Mammary epithelial cell (primary cell): ENCODE measurements at regions of chr11 and their contacts with region 1.

Region 1: DNA sequence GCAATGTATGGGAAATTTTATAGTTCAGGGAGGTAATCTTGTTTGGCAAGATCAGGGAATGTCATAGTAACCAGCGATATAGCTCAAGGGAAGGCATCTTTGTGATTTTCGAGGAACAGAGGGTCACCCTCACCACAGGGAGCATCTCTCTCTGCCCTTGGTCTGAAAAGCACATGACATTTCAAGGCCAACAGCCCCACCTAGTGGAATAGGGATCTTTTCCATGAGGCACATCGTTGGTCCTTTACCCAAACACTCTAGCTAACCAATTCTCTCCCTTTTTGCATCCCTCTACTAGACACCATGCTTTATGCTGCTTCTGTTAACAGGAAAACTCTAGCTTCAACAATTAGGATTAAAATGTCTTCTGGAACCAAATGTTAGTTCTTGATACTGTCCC is 179.0 kb downstream of the GRM5 start:
- DNase-seq: peak; percentile 51
- H3K4me3 ChIP-seq: no peak overlapping the region
- H3K27ac ChIP-seq: no peak overlapping the region
- H3K4me1 ChIP-seq: no peaks in the 10 kb centered on the region
- H3K27me3 ChIP-seq: no peaks in the 10 kb centered on the region
- CTCF ChIP-seq: peak; percentile 42 to 70

Region 2: DNA sequence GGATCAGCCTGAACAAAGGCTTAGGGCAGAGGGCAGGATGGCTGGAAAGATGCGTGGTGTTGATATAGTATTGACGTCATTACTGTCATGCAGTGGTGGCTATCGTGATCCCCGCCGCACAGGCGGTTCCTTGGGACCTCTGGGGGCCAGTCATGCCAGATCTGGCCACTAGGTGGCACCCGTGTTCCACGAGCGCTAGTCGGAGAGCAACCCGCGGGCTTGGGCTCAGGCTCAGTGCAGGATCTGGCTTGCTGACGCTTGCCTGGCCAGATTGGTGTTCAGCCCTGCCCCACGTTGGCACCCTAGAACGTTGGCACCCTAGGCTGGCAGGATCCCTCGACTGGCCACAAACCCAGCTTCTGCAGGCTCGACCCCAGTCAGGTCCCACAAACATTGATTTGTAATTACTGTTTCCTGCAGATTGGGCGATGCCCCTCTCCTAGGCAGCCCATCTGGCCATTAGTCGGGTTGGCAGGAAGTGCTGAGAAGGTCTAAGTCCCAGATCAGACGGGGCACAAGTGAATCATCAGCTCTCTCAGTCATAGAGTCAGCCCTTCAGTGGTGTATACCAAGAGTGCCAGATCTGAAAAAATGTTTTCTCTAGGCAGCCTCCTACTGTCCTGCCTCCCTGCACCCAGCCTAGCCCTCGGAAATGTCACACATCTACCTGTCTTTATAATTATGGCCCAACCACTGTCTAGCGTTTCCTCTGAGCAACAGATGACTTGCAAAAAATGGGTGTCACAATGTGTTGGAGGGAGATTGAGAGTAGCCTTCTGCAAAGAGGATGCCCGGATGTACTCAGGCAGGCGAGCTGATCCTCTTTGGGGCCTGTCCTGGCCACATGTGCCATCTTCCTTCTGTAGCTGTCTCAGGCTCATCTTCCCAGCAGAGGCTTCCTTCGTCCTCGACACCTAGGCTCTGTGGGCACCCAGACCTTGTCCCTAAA is 1533.8 kb before region 1 on chr11:
- CTCF ChIA-PET with region 1: no interaction called
- dilution Hi-C with region 1: no loop called
- in situ Hi-C with region 1: loop called in 1 of 2 experiments (anchors 10 kb)
- intact Hi-C with region 1: loop called (anchors 1 kb)
- DNase-seq: peak; percentile 78
- H3K4me3 ChIP-seq: peak overlapping the region in 2 of 3 experiments; percentile 13 to 30
- H3K27ac ChIP-seq: no peak overlapping the region
- H3K4me1 ChIP-seq: peaks cover 8% of the 10 kb centered on the region
- H3K27me3 ChIP-seq: no peaks in the 10 kb centered on the region
- CTCF ChIP-seq: peak; percentile 89 to 99

Region 3: GRCh38 chr11:87722756-87723565 is 1163.8 kb before region 1 on chr11:
- CTCF ChIA-PET with region 1: no interaction called
- dilution Hi-C with region 1: no loop called
- in situ Hi-C with region 1: no loop called
- intact Hi-C with region 1: loop called (anchors 1 kb)
- DNase-seq: peak; percentile 7
- H3K4me3 ChIP-seq: no peak overlapping the region
- H3K27ac ChIP-seq: no peak overlapping the region
- H3K4me1 ChIP-seq: no peaks in the 10 kb centered on the region
- H3K27me3 ChIP-seq: peaks cover 2% of the 10 kb centered on the region
- CTCF ChIP-seq: peak; percentile 78 to 91

Region 4: DNA sequence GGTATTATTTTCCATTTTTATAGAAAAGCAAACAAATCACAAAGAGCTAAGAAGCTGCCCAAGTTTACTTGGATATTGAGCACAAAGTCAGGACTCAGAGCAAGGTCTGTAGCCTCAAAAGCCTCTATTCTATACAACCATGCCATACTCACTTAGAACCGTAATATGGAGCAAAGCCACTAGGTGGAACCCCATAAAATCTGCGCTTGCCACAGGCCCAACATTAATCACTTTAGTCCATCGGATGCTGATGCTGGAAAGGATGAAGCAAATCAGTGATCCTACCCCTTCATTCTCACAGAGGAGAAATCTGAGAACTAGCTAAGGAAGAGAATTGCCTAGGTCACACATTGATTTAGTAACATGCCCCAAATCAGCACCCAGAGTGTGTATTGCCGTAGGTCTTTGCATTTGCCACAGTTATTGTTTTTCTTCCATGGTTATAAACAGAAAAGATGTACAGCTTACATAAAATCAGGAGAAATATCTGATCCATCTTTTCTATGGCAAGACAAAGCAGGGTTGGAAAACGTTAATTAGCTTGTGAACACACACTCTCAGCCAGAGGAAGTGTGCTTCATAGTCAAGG is 654.8 kb before region 1 on chr11:
- CTCF ChIA-PET with region 1: no interaction called
- dilution Hi-C with region 1: no loop called
- in situ Hi-C with region 1: no loop called
- intact Hi-C with region 1: loop called (anchors 5 kb)
- DNase-seq: peak; percentile 34
- H3K4me3 ChIP-seq: no peak overlapping the region
- H3K27ac ChIP-seq: no peak overlapping the region
- H3K4me1 ChIP-seq: no peaks in the 10 kb centered on the region
- H3K27me3 ChIP-seq: no peaks in the 10 kb centered on the region
- CTCF ChIP-seq: peak; percentile 72 to 75

Region 5: GRCh38 chr11:88552377-88553062 is 334.3 kb before region 1 on chr11:
- CTCF ChIA-PET with region 1: interaction called, 5 read pairs
- dilution Hi-C with region 1: no loop called
- in situ Hi-C with region 1: loop called in 1 of 2 experiments (anchors 10 kb)
- intact Hi-C with region 1: no loop called
- DNase-seq: peak; percentile 55
- H3K4me3 ChIP-seq: no peak overlapping the region
- H3K27ac ChIP-seq: no peak overlapping the region
- H3K4me1 ChIP-seq: peaks cover 45% of the 10 kb centered on the region
- H3K27me3 ChIP-seq: no peaks in the 10 kb centered on the region
- CTCF ChIP-seq: peak; percentile 79 to 88

Region 6: GRCh38 chr11:88770475-88771079 is 116.2 kb before region 1 on chr11:
- CTCF ChIA-PET with region 1: no interaction called
- dilution Hi-C with region 1: no loop called
- in situ Hi-C with region 1: no loop called
- intact Hi-C with region 1: no loop called
- DNase-seq: no peak
- H3K4me3 ChIP-seq: no peak overlapping the region
- H3K27ac ChIP-seq: no peak overlapping the region
- H3K4me1 ChIP-seq: no peaks in the 10 kb centered on the region
- H3K27me3 ChIP-seq: no peaks in the 10 kb centered on the region
- CTCF ChIP-seq: no peak

Region 7: DNA sequence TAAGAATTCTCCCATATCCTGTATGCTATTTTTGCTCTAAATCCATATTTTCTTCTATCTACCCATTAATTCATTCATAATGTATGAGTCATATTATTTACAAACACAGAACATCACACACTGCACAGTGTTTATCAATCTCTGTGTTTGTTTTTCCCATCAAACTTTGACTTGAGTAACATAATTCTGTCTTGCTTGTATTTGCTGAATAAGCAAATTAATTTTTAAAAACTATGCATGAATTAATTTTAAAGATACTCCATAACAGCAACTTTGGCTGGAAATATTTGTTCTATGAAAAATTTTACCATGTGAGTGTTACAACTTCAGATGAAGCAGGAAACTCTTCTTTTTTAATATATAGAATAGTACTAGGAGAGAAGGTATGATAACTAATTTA is 96.6 kb before region 1 on chr11:
- CTCF ChIA-PET with region 1: no interaction called
- dilution Hi-C with region 1: no loop called
- in situ Hi-C with region 1: no loop called
- intact Hi-C with region 1: no loop called
- DNase-seq: no peak
- H3K4me3 ChIP-seq: no peak overlapping the region
- H3K27ac ChIP-seq: no peak overlapping the region
- H3K4me1 ChIP-seq: no peaks in the 10 kb centered on the region
- H3K27me3 ChIP-seq: no peaks in the 10 kb centered on the region
- CTCF ChIP-seq: no peak